T-cell (primary cell): ENCODE measurements at regions of chr2 and their contacts with region 1.

Region 1: DNA sequence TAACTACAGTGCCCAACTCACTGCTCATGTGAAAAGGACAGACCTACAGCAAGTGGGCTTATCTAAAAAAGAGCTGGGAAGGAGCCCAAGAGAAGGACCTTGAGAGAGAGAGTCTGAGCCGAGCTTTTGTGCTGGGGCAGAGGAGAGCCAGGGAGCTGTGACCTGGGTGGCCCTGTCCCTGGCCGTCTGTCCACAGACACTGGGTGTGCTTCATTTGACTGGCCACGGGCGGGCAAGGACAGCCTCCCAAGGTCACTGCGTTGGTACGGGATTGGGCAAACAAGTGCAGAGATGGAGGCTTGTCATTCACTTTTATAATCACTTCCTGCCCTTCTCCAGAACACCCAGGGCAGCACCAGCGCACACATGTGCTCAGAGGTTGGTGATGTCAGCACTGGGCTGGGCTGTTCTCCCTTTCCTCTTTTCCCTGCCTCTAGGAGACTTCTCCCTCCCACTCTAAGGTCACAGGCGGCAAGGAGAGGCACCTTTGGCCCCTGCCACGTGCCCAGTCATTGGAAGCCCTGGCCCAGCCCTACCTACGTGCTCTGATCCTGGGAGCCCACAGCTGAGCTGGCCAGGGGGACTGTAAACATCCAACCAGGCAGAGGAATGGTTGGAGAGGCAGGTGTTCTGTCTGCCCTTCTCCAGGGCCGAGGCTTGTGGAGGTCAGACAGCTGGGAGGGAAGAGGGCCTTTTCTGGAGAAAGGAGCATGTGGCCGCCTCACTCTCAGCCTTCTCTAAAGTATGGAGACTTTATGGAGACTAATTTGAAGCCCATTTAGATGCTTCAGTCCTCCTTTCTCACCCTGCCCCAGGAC is 6.4 kb upstream of the PSD4 start:
- DNase-seq: peak in 10 of 35 experiments; percentile 16 to 61 (median 38)
- ATAC-seq: peak; percentile 65 to 70 (median 68)
- H3K4me3 ChIP-seq: no peak overlapping the region
- H3K4me3 Mint-ChIP-seq: peak overlapping the region; percentile 62 to 70 (median 63)
- H3K27ac ChIP-seq: peak overlapping the region; percentile 85
- H3K27ac Mint-ChIP-seq: peak overlapping the region; percentile 96 to 100
- H3K4me1 ChIP-seq: peaks cover 44 to 57% of the 10 kb centered on the region in 2 experiments
- H3K4me1 Mint-ChIP-seq: peaks cover 78 to 83% (median 79%) of the 10 kb centered on the region in 3 donors
- H3K27me3 ChIP-seq: no peaks in the 10 kb centered on the region
- H3K27me3 Mint-ChIP-seq: no peaks in the 10 kb centered on the region

Region 2: GRCh38 chr2:113105047-113105785 is 62.1 kb before region 1 on chr2:
- CTCF ChIA-PET with region 1: no interaction called
- POLR2A ChIA-PET with region 1: no interaction called
- DNase-seq: no peak
- ATAC-seq: no peak
- H3K4me3 ChIP-seq: no peak overlapping the region
- H3K4me3 Mint-ChIP-seq: no peak overlapping the region
- H3K27ac ChIP-seq: no peak overlapping the region
- H3K27ac Mint-ChIP-seq: no peak overlapping the region
- H3K4me1 ChIP-seq: no peaks in the 10 kb centered on the region
- H3K4me1 Mint-ChIP-seq: no peaks in the 10 kb centered on the region
- H3K27me3 ChIP-seq: no peaks in the 10 kb centered on the region
- H3K27me3 Mint-ChIP-seq: peaks cover 0 to 6% of the 10 kb centered on the region in 2 donors

Region 3: GRCh38 chr2:113181258-113182051 is 14.1 kb after region 1 on chr2:
- CTCF ChIA-PET with region 1: interaction called in 1 of 2 experiments, 11 read pairs
- POLR2A ChIA-PET with region 1: interaction called in 1 of 2 experiments, 3 read pairs
- DNase-seq: peak in 2 of 35 experiments; percentile 31 to 46
- ATAC-seq: peak; percentile 44 to 64 (median 52)
- H3K4me3 ChIP-seq: peak overlapping the region; percentile 4 to 52
- H3K4me3 Mint-ChIP-seq: peak overlapping the region; percentile 52 to 86 (median 60)
- H3K27ac ChIP-seq: peak overlapping the region; percentile 49
- H3K27ac Mint-ChIP-seq: peak overlapping the region; percentile 91 to 96
- H3K4me1 ChIP-seq: peaks cover 64 to 98% of the 10 kb centered on the region in 2 experiments
- H3K4me1 Mint-ChIP-seq: peaks cover 96 to 99% (median 96%) of the 10 kb centered on the region in 3 donors
- H3K27me3 ChIP-seq: no peaks in the 10 kb centered on the region
- H3K27me3 Mint-ChIP-seq: no peaks in the 10 kb centered on the region

Region 4: DNA sequence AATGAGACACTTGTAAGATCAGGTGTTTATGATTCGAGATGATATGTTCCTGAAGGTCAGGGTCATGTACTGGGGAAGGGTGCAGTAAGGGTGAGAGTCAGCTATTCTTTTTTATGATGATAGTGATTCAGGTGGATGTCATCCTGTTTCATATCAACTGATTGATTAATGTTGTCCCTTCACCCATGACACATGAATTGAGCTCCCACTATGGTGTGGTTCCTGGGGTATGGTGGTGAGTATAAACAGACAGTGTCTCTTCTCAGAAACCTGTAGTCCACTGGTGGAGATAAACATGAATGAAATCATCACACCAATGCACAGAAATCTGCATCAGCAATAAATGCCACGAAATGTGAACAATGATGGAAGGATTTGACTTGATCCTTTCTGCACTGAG is 148.8 kb after region 1 on chr2:
- CTCF ChIA-PET with region 1: no interaction called
- POLR2A ChIA-PET with region 1: no interaction called
- DNase-seq: no peak
- ATAC-seq: no peak
- H3K4me3 ChIP-seq: no peak overlapping the region
- H3K4me3 Mint-ChIP-seq: no peak overlapping the region
- H3K27ac ChIP-seq: no peak overlapping the region
- H3K27ac Mint-ChIP-seq: no peak overlapping the region
- H3K4me1 ChIP-seq: no peaks in the 10 kb centered on the region
- H3K4me1 Mint-ChIP-seq: no peaks in the 10 kb centered on the region
- H3K27me3 ChIP-seq: peaks cover 0 to 5% of the 10 kb centered on the region in 2 experiments
- H3K27me3 Mint-ChIP-seq: peaks cover 9 to 14% of the 10 kb centered on the region in 2 donors